T-cell (primary cell): ENCODE measurements at regions of chrX and their contacts with region 1.

Region 1: GRCh38 chrX:24748202-24748843 is 54.6 kb downstream of the POLA1 start:
- DNase-seq: no peak
- ATAC-seq: no peak
- H3K4me3 ChIP-seq: no peak overlapping the region
- H3K4me3 Mint-ChIP-seq: no peak overlapping the region
- H3K27ac ChIP-seq: no peak overlapping the region
- H3K27ac Mint-ChIP-seq: no peak overlapping the region
- H3K4me1 ChIP-seq: no peaks in the 10 kb centered on the region
- H3K4me1 Mint-ChIP-seq: no peaks in the 10 kb centered on the region
- H3K27me3 ChIP-seq: no peaks in the 10 kb centered on the region
- H3K27me3 Mint-ChIP-seq: peaks cover 0 to 3% of the 10 kb centered on the region in 2 donors

Region 2: DNA sequence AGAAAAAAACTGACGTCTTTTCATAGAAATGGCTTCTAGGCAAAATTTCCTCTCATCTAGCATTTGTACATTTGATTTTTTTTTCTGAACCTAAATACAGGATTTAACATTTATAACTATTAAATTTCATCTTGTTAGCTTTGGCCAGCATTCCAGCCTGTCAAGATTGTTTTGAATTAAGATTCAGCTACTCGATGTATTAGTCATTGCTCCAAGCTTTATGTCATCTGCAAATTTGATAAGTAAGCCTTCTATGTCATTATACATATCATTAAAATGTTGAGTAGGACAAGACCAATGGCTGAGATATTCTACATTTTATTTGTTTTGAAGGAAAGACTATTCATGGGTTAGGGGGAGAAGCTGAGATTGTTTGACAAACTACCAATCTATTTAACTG is 1701.9 kb before region 1 on chrX:
- CTCF ChIA-PET with region 1: interaction called in 1 of 2 experiments, 10 read pairs
- POLR2A ChIA-PET with region 1: no interaction called
- DNase-seq: no peak
- ATAC-seq: no peak
- H3K4me3 ChIP-seq: no peak overlapping the region
- H3K4me3 Mint-ChIP-seq: no peak overlapping the region
- H3K27ac ChIP-seq: no peak overlapping the region
- H3K27ac Mint-ChIP-seq: no peak overlapping the region
- H3K4me1 ChIP-seq: no peaks in the 10 kb centered on the region
- H3K4me1 Mint-ChIP-seq: no peaks in the 10 kb centered on the region
- H3K27me3 ChIP-seq: no peaks in the 10 kb centered on the region
- H3K27me3 Mint-ChIP-seq: peaks cover 0 to 13% of the 10 kb centered on the region in 2 donors